Activated CD4-positive, alpha-beta T cell treated with anti-CD3 and anti-CD28 coated beads for 36 hours (primary cell): ENCODE measurements at regions of chr14 and their contacts with region 1.

Region 1: GRCh38 chr14:49852301-49853157 is at the start of gene NEMF:
- DNase-seq: peak; percentile 86
- ATAC-seq: peak; percentile 79
- H3K4me3 Mint-ChIP-seq: peak within 1 kb of the TSS; percentile 97
- H3K27ac Mint-ChIP-seq: peak within 1 kb of the TSS; percentile 98
- H3K4me1 Mint-ChIP-seq: peaks cover 39% of the 10 kb centered on the region
- H3K27me3 Mint-ChIP-seq: no peaks in the 10 kb centered on the region
- total RNA-seq, gene NEMF: 62.4 to 97.9 TPM

Region 2: DNA sequence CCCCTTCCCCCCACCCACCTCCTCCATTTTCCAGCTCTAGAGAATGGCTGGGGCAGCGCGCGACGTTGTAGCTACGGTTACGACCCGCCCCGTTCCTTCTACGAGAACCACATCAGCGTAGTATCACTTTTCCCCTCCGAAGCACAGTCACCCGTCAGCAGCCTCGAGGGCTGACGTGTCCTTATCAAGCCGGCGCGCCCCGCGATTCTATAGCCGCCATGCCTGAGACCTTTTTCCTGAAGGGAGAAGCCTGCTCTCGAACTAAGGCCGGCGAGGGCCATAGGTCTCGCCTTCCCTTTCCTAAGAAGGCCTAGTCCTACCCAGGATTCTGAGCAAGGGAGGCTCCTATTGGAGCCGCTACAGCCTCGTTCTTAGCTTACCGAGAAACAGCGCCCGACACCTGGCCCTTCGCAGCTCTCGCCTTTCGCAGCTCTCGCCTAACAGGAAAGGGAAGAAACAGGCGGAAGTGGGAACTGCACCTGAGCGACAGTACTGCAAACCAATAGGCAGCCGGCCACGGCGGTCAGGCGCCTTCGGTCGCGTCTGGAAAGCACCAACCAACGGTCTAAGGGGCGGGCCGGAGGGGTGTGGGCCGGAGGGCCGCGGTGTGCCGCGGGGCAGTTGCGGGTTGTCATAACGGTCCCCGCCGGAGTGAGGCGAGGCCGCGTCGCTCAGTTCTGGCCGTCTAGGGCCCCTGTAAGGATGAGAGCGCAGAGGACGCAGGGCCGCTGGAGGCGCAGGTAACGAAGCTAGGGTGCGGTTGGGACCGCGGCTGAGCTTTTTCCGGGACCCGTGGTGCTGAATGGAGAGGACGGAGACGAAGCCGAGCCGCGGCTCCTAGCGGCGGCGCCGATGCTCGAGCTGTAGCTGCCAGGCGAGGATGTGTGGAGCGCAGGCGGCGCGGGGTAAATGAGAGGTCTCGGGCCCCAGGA is 232.1 kb before region 1 on chr14 and contains the starts of genes MGAT2 and RPL36AL:
- CTCF ChIA-PET with region 1: interaction called, 9 read pairs
- POLR2A ChIA-PET with region 1: interaction called, 5 read pairs
- intact Hi-C with region 1: loop called in 1 of 2 experiments (anchors 2 kb)
- DNase-seq: peak; percentile 97
- ATAC-seq: peak; percentile 90
- H3K4me3 Mint-ChIP-seq: peak within 1 kb of the TSS; percentile 93
- H3K27ac Mint-ChIP-seq: peak within 1 kb of the TSS; percentile 97
- H3K4me1 Mint-ChIP-seq: peaks cover 51% of the 10 kb centered on the region
- H3K27me3 Mint-ChIP-seq: no peaks in the 10 kb centered on the region
- total RNA-seq, gene MGAT2: 23.8 to 32.2 TPM
- total RNA-seq, gene RPL36AL: 272 to 309 TPM

Region 3: GRCh38 chr14:49867831-49868723 is 15.5 kb after region 1 on chr14:
- CTCF ChIA-PET with region 1: interaction called, 158 read pairs
- POLR2A ChIA-PET with region 1: interaction called, 30 read pairs
- intact Hi-C with region 1: no loop called
- DNase-seq: peak; percentile 100
- ATAC-seq: peak; percentile 87
- H3K4me3 Mint-ChIP-seq: peak overlapping the region; percentile 98
- H3K27ac Mint-ChIP-seq: peak overlapping the region; percentile 96
- H3K4me1 Mint-ChIP-seq: peaks cover 22% of the 10 kb centered on the region
- H3K27me3 Mint-ChIP-seq: no peaks in the 10 kb centered on the region

Region 4: DNA sequence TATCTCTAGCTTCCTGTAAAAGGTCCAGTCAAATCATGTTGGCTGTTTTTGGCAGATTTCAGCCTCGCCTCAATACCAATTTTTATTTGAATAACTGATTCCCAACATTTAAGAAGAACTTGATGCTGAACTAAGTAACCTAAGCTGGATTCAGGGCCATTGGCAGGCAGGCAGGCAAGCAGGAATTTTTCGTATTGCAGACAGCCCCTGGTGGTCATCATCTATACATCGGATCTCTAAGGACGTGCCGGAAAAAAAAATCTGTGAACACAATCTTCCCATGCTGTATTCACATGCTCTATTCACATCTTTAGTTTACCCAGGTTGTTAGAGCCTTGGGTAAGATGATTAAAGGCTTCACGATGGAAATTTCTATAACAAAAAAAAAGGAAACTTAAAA is 256.8 kb after region 1 on chr14:
- CTCF ChIA-PET with region 1: interaction called, 80 read pairs
- POLR2A ChIA-PET with region 1: no interaction called
- intact Hi-C with region 1: loop called (anchors 1 kb)
- DNase-seq: no peak
- ATAC-seq: no peak
- H3K4me3 Mint-ChIP-seq: no peak overlapping the region
- H3K27ac Mint-ChIP-seq: no peak overlapping the region
- H3K4me1 Mint-ChIP-seq: peaks cover 32% of the 10 kb centered on the region
- H3K27me3 Mint-ChIP-seq: no peaks in the 10 kb centered on the region

Region 5: GRCh38 chr14:50128225-50128624 is 275.7 kb after region 1 on chr14:
- CTCF ChIA-PET with region 1: interaction called, 17 read pairs
- POLR2A ChIA-PET with region 1: no interaction called
- intact Hi-C with region 1: no loop called
- DNase-seq: no peak
- ATAC-seq: no peak
- H3K4me3 Mint-ChIP-seq: no peak overlapping the region
- H3K27ac Mint-ChIP-seq: no peak overlapping the region
- H3K4me1 Mint-ChIP-seq: peaks cover 2% of the 10 kb centered on the region
- H3K27me3 Mint-ChIP-seq: no peaks in the 10 kb centered on the region